GM12878 (cell line): ENCODE measurements at regions of chr5 and their contacts with region 1.

Region 1: DNA sequence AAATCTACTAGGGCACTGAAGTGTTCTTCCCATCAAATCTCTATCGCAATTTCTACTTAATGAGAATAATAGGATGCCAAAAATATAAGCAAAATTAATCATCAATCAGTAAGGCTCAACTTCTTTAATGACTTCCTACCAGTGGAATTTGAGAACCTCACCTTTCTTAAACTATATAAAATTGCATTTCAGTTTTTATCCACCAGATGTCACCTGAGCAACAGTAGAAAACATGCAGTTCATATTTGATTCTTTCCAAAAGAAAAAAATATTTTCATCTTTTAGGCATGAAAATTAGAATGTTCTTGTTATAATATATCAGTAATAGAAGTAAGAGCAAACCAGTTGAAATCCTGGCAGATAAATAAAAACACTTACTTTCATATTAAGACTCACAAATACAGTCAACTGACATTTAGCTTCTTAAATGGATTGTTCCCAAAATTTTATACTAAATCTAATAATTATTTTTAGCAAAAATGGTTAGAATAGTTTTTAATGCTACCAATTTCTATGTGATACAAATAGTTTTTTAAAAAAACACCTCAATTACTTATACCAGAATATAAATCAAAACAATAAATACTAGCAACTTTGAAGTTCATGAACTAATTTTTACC is 13.4 kb upstream of the CCDC112 start:
- DNase-seq: no peak
- ATAC-seq: peak; percentile 75
- H3K4me3 ChIP-seq: no peak overlapping the region
- H3K27ac ChIP-seq: no peak overlapping the region
- H3K4me1 ChIP-seq: no peaks in the 10 kb centered on the region
- H3K27me3 ChIP-seq: no peaks in the 10 kb centered on the region
- CTCF ChIP-seq: peak; percentile 25 to 50 (median 47); a peak in 4 of 6 replicates
- EP300 ChIP-seq: no peak
- POLR2A ChIP-seq: no peak
- RAD21 ChIP-seq: peak; percentile 77

Region 2: GRCh38 chr5:114957384-114957783 is 352.5 kb before region 1 on chr5:
- CTCF ChIA-PET with region 1: no interaction called
- POLR2A ChIA-PET with region 1: no interaction called
- RAD21 ChIA-PET with region 1: no interaction called
- SMC1A ChIA-PET with region 1: no interaction called
- in situ Hi-C with region 1: no loop called
- intact Hi-C with region 1: no loop called
- DNase-seq: peak; percentile 48
- ATAC-seq: peak; percentile 79
- H3K4me3 ChIP-seq: no peak overlapping the region
- H3K27ac ChIP-seq: no peak overlapping the region
- H3K4me1 ChIP-seq: no peaks in the 10 kb centered on the region
- H3K27me3 ChIP-seq: no peaks in the 10 kb centered on the region
- CTCF ChIP-seq: no peak
- EP300 ChIP-seq: no peak
- POLR2A ChIP-seq: no peak
- RAD21 ChIP-seq: no peak

Region 3: DNA sequence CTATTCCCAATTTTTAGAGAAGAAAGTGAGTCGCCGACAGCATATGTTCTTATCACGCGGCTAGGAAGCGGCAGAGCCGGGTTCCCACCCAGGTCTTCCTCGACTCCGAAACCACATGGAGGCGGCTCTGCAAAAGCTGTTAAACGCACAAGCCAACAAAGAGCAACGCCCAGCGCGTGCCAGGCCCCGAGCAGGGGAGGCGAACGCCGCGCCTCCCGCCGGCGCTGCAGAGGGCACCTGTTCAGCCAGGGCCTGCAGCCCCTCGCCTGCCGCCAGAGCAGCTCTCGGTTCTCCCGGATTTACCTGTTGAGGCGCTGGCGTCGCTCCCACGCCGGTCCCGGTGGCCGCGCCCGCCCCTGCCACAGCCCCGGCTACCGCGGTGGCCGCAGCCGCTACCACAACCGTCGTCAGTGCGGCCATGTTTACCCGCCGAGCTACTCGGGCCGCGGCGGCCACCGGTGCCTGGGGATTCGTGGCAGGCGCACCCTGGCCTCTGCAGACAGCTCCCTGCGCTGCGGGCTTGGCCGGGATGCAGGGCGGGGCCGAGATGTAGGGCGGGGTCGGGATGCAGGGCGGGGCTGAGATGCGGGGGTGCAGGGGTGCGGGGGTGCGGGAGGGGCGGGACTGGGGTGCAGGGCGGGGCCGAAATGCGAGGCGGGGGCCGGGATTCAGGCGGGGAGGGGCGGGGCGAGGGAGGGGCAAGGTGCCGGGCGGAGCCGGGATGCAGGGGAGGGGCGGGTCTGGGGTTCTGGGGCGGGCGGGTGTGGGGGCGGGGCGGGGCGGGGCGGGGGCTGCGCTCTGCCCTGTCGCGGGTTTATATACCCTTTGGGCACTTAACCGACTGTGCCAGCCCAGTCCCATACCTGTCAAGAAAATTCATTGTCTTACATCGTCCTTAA is 13.5 kb before region 1 on chr5 and contains the start of gene CCDC112:
- CTCF ChIA-PET with region 1: interaction called, 24 read pairs
- POLR2A ChIA-PET with region 1: interaction called, 4 read pairs
- RAD21 ChIA-PET with region 1: interaction called, 4 read pairs
- SMC1A ChIA-PET with region 1: interaction called, 4 read pairs
- in situ Hi-C with region 1: no loop called
- intact Hi-C with region 1: no loop called
- DNase-seq: peak; percentile 11
- ATAC-seq: peak; percentile 89
- H3K4me3 ChIP-seq: peak within 1 kb of the TSS; percentile 76
- H3K27ac ChIP-seq: no peak within 1 kb of the TSS
- H3K4me1 ChIP-seq: no peaks in the 10 kb centered on the region
- H3K27me3 ChIP-seq: no peaks in the 10 kb centered on the region; a peak in 2 of 4 replicates
- CTCF ChIP-seq: no peak
- EP300 ChIP-seq: no peak
- POLR2A ChIP-seq: peak; percentile 64
- RAD21 ChIP-seq: no peak
- polyA plus RNA-seq, gene CCDC112: 0.43 to 0.71 TPM

Region 4: GRCh38 chr5:115372146-115372545 is 62.3 kb after region 1 on chr5:
- CTCF ChIA-PET with region 1: interaction called, 26 read pairs
- POLR2A ChIA-PET with region 1: no interaction called
- RAD21 ChIA-PET with region 1: interaction called, 11 read pairs
- SMC1A ChIA-PET with region 1: interaction called, 39 read pairs
- in situ Hi-C with region 1: no loop called
- intact Hi-C with region 1: no loop called
- DNase-seq: no peak
- ATAC-seq: no peak
- H3K4me3 ChIP-seq: no peak overlapping the region
- H3K27ac ChIP-seq: no peak overlapping the region
- H3K4me1 ChIP-seq: no peaks in the 10 kb centered on the region
- H3K27me3 ChIP-seq: no peaks in the 10 kb centered on the region; a peak in 1 of 4 replicates
- CTCF ChIP-seq: no peak
- EP300 ChIP-seq: no peak
- POLR2A ChIP-seq: no peak
- RAD21 ChIP-seq: no peak

Region 5: DNA sequence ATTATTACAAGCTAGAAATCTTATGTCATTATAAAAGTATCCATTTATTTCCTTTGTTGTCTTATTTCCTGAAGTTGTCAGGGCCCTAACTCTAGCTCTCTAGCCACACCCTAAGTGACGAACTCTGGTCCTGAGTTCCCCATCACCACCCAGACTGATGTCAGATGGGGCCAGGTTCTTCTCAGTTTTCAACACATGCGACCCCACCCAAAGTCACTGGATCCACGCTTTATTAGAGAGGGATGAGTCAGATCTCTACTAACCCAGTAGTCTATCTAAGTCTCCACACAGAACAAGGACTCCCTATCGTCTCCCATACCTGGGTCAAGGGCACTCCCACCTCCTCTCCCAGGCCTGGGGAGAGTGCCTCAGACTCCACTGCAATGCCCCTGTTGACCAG is 241.6 kb after region 1 on chr5:
- CTCF ChIA-PET with region 1: interaction called, 6 read pairs
- POLR2A ChIA-PET with region 1: no interaction called
- RAD21 ChIA-PET with region 1: interaction called, 14 read pairs
- SMC1A ChIA-PET with region 1: interaction called, 13 read pairs
- in situ Hi-C with region 1: no loop called
- intact Hi-C with region 1: no loop called
- DNase-seq: no peak
- ATAC-seq: peak; percentile 27
- H3K4me3 ChIP-seq: no peak overlapping the region
- H3K27ac ChIP-seq: no peak overlapping the region
- H3K4me1 ChIP-seq: no peaks in the 10 kb centered on the region
- H3K27me3 ChIP-seq: no peaks in the 10 kb centered on the region
- CTCF ChIP-seq: no peak
- EP300 ChIP-seq: no peak
- POLR2A ChIP-seq: no peak
- RAD21 ChIP-seq: no peak

Region 6: GRCh38 chr5:115594128-115595047 is 284.5 kb after region 1 on chr5:
- CTCF ChIA-PET with region 1: interaction called, 85 read pairs
- POLR2A ChIA-PET with region 1: no interaction called
- RAD21 ChIA-PET with region 1: interaction called, 41 read pairs
- SMC1A ChIA-PET with region 1: interaction called, 35 read pairs
- in situ Hi-C with region 1: loop called (anchors 5 kb)
- intact Hi-C with region 1: no loop called
- DNase-seq: no peak
- ATAC-seq: no peak
- H3K4me3 ChIP-seq: no peak overlapping the region
- H3K27ac ChIP-seq: no peak overlapping the region
- H3K4me1 ChIP-seq: peaks cover 4% of the 10 kb centered on the region
- H3K27me3 ChIP-seq: no peaks in the 10 kb centered on the region
- CTCF ChIP-seq: no peak
- EP300 ChIP-seq: no peak
- POLR2A ChIP-seq: no peak
- RAD21 ChIP-seq: no peak

Region 7: DNA sequence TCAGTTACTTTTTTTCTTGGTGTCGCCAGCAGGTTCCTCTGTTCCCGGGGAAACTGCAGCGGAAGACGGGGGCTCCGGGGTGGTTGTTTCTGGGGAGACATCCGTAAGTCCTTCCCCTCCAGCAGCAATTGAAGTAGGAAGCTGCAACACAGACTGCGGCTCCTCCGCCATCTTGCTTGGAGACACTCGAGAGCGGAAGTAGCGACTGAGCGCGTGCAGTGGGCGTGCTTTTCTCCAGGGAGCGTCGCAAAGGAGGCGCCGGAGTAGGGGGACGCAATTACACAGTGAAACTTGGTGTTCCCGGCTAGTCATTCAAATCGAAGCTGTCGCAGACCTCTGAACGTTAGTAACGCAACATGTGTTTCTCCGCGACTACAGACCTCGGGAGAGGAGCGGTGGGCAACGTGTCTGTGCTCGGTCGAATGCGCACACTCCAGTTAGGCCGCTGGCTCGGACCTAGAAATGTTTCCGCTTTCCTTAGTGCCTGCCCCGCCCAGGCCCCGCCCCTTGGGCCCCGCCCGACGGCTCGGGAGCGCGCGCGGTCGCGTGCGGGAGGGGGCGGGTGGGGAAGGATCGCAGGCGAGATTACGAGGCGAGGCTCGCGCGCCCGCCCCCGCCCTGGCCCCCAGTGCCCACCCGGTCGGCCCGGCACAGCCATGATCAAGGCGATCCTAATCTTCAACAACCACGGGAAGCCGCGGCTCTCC is 531.7 kb after region 1 on chr5 and contains the starts of genes AP3S1 and ATG12:
- CTCF ChIA-PET with region 1: interaction called, 10 read pairs
- POLR2A ChIA-PET with region 1: no interaction called
- RAD21 ChIA-PET with region 1: no interaction called
- SMC1A ChIA-PET with region 1: interaction called, 4 read pairs
- in situ Hi-C with region 1: loop called (anchors 5 kb)
- intact Hi-C with region 1: no loop called
- DNase-seq: peak; percentile 88
- ATAC-seq: peak; percentile 84
- H3K4me3 ChIP-seq: peak within 1 kb of the TSS; percentile 83
- H3K27ac ChIP-seq: peak within 1 kb of the TSS; percentile 91
- H3K4me1 ChIP-seq: peaks cover 19% of the 10 kb centered on the region
- H3K27me3 ChIP-seq: no peaks in the 10 kb centered on the region
- CTCF ChIP-seq: no peak
- EP300 ChIP-seq: no peak
- POLR2A ChIP-seq: peak; percentile 93
- RAD21 ChIP-seq: no peak
- polyA plus RNA-seq, gene AP3S1: 36.4 to 48.5 TPM
- polyA plus RNA-seq, gene ATG12: 67.4 to 92.0 TPM